PC-3 (cell line): ENCODE measurements at regions of chr3 and their contacts with region 1.

Region 1: GRCh38 chr3:120795017-120795648 is 52.6 kb downstream of the GTF2E1 start:
- DNase-seq: peak; percentile 93
- ATAC-seq: peak; percentile 65
- H3K4me3 ChIP-seq: no peak overlapping the region
- H3K27ac ChIP-seq: 0 out of 2 replicates have a peak overlapping the region, but pooled peaks have one; percentile 3
- H3K4me1 ChIP-seq: peaks cover 28% of the 10 kb centered on the region
- H3K27me3 ChIP-seq: no peaks in the 10 kb centered on the region
- CTCF ChIP-seq: peak; percentile 99

Region 2: DNA sequence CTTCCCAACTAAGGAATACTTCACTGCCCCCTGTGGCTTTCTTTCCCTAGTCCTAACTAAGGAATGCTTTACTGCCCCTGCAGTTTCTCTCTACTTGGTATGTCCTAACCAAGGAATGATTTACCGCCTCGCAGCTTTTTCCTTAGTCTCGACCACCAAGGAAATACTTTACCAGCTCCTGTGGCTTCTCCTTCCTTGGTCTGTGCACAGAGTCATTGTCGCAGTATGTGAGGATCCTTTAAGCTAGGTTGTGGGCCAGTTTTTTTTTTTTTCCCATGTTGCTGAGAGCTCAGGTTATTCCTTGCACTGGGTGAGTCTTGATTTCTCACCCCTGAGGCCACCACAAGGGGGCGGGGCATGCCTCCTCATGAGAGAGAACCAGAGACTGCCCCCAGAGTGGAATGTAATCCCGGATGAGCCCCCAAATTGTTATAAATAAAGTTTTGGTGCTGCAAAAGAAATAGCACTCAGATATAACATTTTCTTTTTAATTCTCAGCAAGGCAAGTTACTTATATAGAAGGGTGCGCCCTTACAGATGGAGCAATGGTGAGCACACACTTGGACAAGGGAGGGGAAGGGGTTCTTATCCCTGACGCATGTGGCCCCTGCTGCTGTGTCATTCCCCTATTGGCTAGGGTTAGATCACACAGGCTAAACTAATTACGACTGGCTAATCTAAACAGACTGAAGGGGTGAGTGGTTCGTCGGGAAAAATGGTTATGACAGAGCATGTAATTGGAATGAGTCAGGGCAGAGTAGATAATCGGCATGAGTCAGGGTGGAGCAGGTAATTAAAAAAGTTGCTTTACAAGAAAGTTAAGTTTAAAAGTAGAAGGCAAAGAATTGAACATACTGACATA is 172.0 kb before region 1 on chr3:
- CTCF ChIA-PET with region 1: interaction called, 5 read pairs
- POLR2A ChIA-PET with region 1: no interaction called
- intact Hi-C with region 1: loop called (anchors 1 kb)
- DNase-seq: peak; percentile 98
- ATAC-seq: peak; percentile 94
- H3K4me3 ChIP-seq: peak overlapping the region; percentile 16
- H3K27ac ChIP-seq: peak overlapping the region; percentile 90
- H3K4me1 ChIP-seq: peaks cover 28% of the 10 kb centered on the region
- H3K27me3 ChIP-seq: no peaks in the 10 kb centered on the region
- CTCF ChIP-seq: peak; percentile 81